Activated CD4-positive, alpha-beta T cell treated with anti-CD3 and anti-CD28 coated beads for 36 hours (primary cell): ENCODE measurements at regions of chr11 and their contacts with region 1.

Region 1: DNA sequence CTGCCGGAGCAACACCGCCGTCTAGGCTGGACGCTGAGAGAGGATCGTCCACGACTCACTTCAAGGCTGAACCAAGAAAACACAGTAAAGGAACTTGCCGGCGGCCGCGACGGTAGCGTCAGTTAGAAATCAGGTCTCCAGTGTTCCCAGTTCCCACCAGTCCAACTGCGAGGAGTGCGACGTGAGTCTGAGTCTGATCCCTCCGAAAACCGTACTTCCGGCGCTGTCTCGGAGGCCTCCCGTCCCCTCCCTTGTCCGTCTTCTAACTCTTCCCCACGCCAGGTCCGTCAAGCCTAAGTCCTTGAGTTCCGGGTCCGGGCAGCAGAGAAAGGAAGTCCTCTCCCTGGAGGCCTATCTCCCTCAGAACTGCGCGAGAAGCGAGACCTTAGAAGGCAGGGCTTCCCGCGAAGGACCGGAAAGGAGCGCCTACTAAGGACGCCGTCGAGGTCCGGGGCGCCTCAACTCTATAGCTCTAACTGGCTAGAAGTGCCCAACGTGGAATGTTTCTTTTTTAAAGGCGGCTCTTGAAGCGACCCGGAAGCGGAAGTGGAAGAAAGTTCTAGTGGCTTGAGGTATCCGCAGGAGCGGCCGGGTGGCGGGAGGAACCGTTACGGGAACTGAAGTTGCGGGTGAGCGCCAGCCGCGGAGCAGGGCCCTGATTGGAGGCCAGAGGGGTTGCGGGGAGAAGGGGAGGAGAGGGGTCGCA is at the starts of genes BANF1 and EIF1AD:
- DNase-seq: peak; percentile 95
- ATAC-seq: peak; percentile 88
- H3K4me3 Mint-ChIP-seq: peak within 1 kb of the TSS; percentile 100
- H3K27ac Mint-ChIP-seq: peak within 1 kb of the TSS; percentile 98
- H3K4me1 Mint-ChIP-seq: peaks cover 36% of the 10 kb centered on the region
- H3K27me3 Mint-ChIP-seq: no peaks in the 10 kb centered on the region
- total RNA-seq, gene BANF1: 233 to 293 TPM
- total RNA-seq, gene EIF1AD: 45.1 to 52.2 TPM

Region 2: DNA sequence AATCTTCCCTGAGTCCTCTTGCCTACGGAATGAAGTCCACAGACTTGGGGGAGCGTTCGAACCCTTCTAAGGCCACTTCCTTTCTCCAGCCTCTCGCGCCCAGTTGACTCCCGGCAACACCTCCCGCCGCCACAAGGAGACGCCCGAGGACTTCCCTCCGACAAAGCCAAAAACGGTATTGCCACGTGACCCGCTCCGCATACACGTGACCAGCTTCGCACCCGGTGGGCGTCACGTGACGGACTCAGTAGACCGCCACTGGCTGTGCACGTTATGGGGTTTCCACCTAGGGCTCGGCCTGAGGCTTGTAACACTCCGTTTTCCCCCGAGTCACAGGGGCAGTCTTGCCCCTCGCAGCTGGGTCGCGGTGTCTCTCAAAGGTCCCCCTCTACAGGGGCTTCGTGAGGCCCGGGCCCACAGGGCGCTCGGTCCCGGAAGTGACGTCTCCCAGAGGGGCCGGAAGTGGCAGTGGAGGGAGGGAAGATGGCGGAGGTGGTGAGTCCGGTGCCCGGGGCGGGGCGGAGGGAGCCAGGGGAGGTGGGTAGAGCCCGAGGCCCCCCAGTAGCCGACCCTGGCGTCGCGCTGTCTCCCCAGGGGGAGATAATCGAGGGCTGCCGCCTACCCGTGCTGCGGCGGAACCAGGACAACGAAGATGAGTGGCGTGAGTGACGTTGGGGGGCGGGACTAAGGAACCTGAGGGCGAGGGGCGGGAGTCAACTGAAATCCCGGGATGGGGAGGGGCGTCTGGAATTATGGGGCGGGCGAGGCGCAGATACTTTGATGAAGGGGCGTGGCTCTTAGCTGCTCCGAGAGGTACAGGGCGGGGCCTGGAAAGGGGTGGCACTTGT is 290.1 kb before region 1 on chr11 and contains the start of gene KAT5:
- CTCF ChIA-PET with region 1: no interaction called
- POLR2A ChIA-PET with region 1: interaction called, 3 read pairs
- intact Hi-C with region 1: loop called (anchors 1 to 5 kb)
- DNase-seq: peak; percentile 99
- ATAC-seq: peak; percentile 86
- H3K4me3 Mint-ChIP-seq: peak within 1 kb of the TSS; percentile 90
- H3K27ac Mint-ChIP-seq: peak within 1 kb of the TSS; percentile 96
- H3K4me1 Mint-ChIP-seq: peaks cover 27% of the 10 kb centered on the region
- H3K27me3 Mint-ChIP-seq: no peaks in the 10 kb centered on the region
- total RNA-seq, gene KAT5: 56.5 to 65.1 TPM

Region 3: DNA sequence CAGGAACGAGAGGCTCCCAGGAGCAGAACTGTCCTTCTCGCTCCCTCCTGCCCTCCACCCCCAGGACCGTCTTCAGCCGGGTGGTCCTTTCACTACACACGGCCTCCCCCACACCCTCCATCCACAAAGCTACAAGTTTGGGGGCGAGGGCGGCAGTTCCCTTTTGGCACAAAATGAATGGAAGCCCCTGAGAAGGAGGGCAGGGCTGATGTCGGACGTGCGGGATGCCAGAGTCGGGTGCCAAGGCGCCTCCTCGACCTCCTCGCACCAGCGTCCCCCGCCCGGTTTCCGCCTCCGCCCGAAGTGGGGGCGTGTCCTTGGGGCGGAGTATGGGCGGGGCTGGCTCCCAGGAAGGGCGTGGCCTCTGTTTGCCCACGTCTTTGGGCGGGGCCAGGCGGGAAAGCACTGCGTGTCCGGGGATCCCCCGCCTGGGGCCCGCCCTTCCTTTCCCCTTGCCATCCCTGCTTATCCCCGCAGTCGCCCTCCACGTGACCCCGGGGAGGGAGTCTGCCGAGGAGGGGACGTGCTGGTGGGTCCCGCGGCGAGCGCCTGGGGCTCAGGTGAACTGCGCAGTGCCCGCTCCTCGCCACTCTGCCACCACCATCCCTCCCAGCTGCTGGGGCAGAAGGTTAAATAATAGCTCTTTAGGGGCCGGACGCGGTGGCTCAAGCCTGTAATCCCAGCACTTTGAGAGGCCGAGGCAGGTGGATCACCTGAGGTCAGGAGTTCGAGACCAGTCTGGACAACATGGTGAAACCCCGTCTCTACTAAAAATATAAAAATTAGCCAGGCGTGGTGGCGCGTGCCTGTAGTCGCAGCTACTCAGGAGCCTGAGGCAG is 128.6 kb before region 1 on chr11:
- CTCF ChIA-PET with region 1: interaction called, 3 read pairs
- POLR2A ChIA-PET with region 1: no interaction called
- intact Hi-C with region 1: loop called in 1 of 2 experiments (anchors 1 kb)
- DNase-seq: peak; percentile 97
- ATAC-seq: peak; percentile 93
- H3K4me3 Mint-ChIP-seq: peak overlapping the region; percentile 84
- H3K27ac Mint-ChIP-seq: peak overlapping the region; percentile 91
- H3K4me1 Mint-ChIP-seq: peaks cover 15% of the 10 kb centered on the region
- H3K27me3 Mint-ChIP-seq: no peaks in the 10 kb centered on the region

Region 4: DNA sequence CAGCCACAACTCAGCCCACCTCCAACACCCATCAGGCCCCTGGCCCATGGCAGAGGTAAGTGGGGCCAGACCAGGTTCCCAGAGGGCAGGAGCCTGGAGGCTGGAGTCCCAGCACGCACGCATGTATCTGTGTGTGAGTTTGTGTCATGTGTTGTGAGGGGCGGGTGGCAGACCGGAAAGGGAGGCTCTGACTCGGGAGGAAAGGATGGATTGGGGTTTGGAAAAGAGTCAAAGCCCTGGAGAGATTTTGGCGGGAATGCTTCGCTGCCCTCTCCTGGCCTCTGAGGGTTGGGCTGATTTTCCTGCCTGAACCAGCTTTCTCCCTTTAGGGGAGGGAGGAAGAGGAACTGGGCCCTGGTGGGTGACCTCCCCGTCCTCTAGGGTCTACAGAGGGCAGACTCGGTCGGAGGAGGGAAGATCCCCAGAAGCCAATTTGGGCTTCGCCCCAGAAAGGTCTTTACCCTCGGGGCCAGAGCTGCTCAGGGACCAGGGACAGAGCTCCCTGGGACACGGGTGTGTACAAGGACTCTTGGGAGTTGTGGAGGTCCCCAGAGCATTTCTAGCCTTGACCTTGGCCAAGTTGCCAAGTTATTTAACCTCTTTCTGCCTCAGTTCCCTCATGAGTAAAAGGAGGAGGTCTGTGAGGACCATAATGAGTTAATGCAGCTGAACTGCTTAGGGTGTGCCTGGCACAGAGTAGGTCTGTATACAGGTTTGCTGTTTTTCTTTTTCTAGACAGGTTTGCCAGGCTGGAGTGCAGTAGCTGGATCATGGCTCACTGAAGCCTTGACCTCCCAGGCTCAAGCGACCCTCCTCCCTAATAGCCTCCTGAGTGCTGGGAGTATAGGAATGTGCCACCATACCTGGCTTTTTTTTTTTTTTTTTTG is 90.2 kb before region 1 on chr11:
- CTCF ChIA-PET with region 1: no interaction called
- POLR2A ChIA-PET with region 1: no interaction called
- intact Hi-C with region 1: no loop called
- DNase-seq: no peak
- ATAC-seq: no peak
- H3K4me3 Mint-ChIP-seq: no peak overlapping the region
- H3K27ac Mint-ChIP-seq: no peak overlapping the region
- H3K4me1 Mint-ChIP-seq: peaks cover 18% of the 10 kb centered on the region
- H3K27me3 Mint-ChIP-seq: peaks cover 2% of the 10 kb centered on the region

Region 5: DNA sequence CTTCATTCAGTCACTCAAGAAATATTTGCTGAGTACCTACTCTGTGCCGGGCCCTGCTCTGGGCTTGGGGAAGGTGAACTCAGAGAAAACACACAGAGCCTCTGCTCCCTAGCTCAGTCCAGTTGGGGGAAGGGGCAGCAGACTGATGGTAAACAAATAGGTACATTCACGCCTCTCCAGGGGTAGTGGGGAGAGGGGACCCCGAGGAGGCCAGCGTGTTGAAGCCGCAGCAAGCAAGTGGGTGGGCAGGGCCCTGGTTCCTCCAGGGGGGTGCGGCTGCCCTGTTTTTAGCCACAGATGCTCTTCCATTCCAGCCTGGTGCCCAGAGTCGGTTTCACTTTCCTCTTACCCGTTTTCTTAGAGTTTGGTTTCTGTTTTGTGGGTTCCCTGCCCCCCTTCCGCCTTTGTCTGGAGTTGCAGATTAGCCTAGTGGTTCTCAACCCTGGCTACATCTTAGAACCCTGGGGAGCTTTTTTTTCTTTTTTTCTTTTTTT is 74.1 kb before region 1 on chr11:
- CTCF ChIA-PET with region 1: no interaction called
- POLR2A ChIA-PET with region 1: no interaction called
- intact Hi-C with region 1: no loop called
- DNase-seq: peak; percentile 88
- ATAC-seq: peak; percentile 94
- H3K4me3 Mint-ChIP-seq: peak overlapping the region; percentile 65
- H3K27ac Mint-ChIP-seq: peak overlapping the region; percentile 96
- H3K4me1 Mint-ChIP-seq: peaks cover 26% of the 10 kb centered on the region
- H3K27me3 Mint-ChIP-seq: no peaks in the 10 kb centered on the region

Region 6: GRCh38 chr11:65961232-65961901 is 40.7 kb before region 1 on chr11 and contains the start of gene SART1:
- CTCF ChIA-PET with region 1: interaction called, 7 read pairs
- POLR2A ChIA-PET with region 1: interaction called, 3 read pairs
- intact Hi-C with region 1: loop called (anchors 1 kb)
- DNase-seq: peak; percentile 98
- ATAC-seq: peak; percentile 91
- H3K4me3 Mint-ChIP-seq: peak within 1 kb of the TSS; percentile 92
- H3K27ac Mint-ChIP-seq: peak within 1 kb of the TSS; percentile 97
- H3K4me1 Mint-ChIP-seq: peaks cover 37% of the 10 kb centered on the region
- H3K27me3 Mint-ChIP-seq: no peaks in the 10 kb centered on the region
- total RNA-seq, gene SART1: 54.7 to 84.5 TPM

Region 7: GRCh38 chr11:66136752-66137123 is 134.6 kb after region 1 on chr11:
- CTCF ChIA-PET with region 1: no interaction called
- POLR2A ChIA-PET with region 1: no interaction called
- intact Hi-C with region 1: loop called in 1 of 2 experiments (anchors 2 kb)
- DNase-seq: peak; percentile 52
- ATAC-seq: no peak
- H3K4me3 Mint-ChIP-seq: no peak overlapping the region
- H3K27ac Mint-ChIP-seq: peak overlapping the region; percentile 55
- H3K4me1 Mint-ChIP-seq: peaks cover 59% of the 10 kb centered on the region
- H3K27me3 Mint-ChIP-seq: no peaks in the 10 kb centered on the region

Region 8: DNA sequence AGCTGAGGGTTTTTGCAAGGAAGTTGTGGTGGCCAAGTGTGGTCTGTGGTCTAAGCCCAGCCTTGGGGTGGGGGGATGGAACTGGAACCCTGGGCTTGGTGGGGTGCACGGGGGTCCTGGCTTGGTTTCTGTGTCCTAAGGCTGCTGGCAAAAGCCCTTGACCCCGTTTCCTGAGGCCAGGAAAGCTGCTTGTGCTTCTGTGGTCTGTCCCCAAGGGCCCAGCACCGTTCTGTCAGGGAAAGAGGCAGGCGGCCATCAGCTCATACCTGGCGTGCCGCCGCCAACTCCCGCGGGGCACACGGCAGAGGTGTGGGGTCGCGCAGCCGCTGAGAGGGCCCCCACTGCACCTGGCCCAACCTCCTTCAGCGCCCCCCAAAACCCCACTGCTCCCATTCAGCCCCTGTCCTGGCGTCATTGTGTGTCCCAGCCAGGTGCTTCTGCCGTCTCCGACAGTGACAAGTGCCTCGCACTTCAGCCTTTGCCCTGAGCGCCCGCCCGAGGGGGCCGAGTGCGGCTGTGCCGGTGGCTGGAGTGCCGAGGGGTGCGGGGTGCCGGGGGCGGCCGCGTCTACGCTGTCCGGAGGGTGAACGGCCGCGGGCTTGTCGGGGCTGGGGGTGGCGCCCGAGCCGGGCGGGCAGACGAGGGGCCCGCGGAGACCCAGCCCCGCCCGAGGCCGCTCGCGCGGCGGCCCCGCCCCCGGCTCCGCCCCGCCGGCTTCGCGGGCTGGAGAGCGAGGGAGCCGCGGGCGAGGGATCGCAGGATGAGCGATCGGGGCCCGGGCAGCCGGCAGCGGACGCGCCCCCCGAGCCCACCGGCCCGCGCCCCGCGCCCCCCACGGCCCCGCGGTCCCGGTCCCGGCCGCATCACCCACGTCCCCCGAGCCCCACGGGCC is 275.6 kb after region 1 on chr11 and contains the start of gene CNIH2:
- CTCF ChIA-PET with region 1: no interaction called
- POLR2A ChIA-PET with region 1: no interaction called
- intact Hi-C with region 1: no loop called
- DNase-seq: peak; percentile 64
- ATAC-seq: peak; percentile 36
- H3K4me3 Mint-ChIP-seq: peak within 1 kb of the TSS; percentile 43
- H3K27ac Mint-ChIP-seq: no peak within 1 kb of the TSS
- H3K4me1 Mint-ChIP-seq: peaks cover 16% of the 10 kb centered on the region
- H3K27me3 Mint-ChIP-seq: no peaks in the 10 kb centered on the region
- total RNA-seq, gene CNIH2: 1.3 to 1.6 TPM

Region 9: DNA sequence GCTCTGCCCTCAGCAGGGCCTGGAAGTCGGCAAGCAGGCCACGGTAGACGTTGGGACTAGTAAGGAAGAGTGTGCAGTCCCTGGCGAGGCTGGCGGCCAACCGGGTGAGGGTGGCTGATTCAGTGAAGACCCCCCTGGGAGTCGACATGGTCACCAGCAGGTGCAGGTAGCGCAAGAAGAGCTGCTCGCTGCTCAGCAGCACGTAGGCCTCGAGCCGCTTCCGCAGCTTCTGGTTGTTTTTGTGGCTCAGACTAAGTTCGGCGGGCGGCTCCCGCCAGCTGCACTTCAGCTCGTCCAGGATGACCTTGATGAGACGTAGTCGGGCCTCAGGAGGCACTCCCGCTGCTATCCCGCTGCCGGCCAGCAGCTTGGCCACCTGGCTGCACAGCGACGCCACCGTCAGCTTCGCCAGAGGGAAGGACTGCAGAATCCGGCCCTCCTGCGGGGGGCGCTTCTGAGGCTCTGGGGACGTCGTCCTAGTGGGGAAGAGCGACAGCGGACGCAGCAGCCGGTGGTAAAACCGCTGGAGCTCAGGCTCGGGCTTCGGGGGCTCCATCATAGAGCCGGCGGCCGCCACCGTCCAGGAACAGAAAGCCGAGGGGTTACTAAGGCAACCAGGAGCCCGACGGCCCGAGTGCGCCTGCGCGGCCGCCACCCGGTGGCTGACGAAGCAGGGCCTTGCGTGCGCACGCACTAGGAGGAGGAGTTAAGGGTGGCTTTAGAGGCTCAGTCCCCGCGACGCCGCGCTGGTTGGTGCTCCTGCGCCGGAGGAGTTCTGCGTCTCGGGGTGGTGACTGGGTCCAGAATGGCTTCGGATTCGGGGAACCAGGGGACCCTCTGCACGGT is 590.6 kb after region 1 on chr11 and contains the starts of genes CCDC87 and CCS:
- CTCF ChIA-PET with region 1: no interaction called
- POLR2A ChIA-PET with region 1: no interaction called
- intact Hi-C with region 1: loop called in 1 of 2 experiments (anchors 5 kb)
- DNase-seq: peak; percentile 99
- ATAC-seq: peak; percentile 100
- H3K4me3 Mint-ChIP-seq: peak within 1 kb of the TSS; percentile 93
- H3K27ac Mint-ChIP-seq: peak within 1 kb of the TSS; percentile 98
- H3K4me1 Mint-ChIP-seq: peaks cover 19% of the 10 kb centered on the region
- H3K27me3 Mint-ChIP-seq: no peaks in the 10 kb centered on the region
- total RNA-seq, gene CCDC87: 0.09 to 0.14 TPM
- total RNA-seq, gene CCS: 16.3 to 24.0 TPM